Vagina (tissue), 2 donors: ENCODE measurements at regions of chr5 and their contacts with region 1.

Region 1: GRCh38 chr5:178163772-178164735 is 10.4 kb upstream of the NHP2 start:
- DNase-seq: no peak
- H3K4me3 ChIP-seq: peak overlapping the region in 1 of 2 donors; percentile 30
- H3K27ac ChIP-seq: no peak overlapping the region
- H3K4me1 ChIP-seq: peaks cover 8% of the 10 kb centered on the region
- H3K27me3 ChIP-seq: no peaks in the 10 kb centered on the region
- CTCF ChIP-seq: peak; percentile 96 to 99 (median 97)
- POLR2A ChIP-seq: no peak

Region 2: GRCh38 chr5:178075840-178076548 is 88.1 kb before region 1 on chr5:
- intact Hi-C with region 1: loop called (anchors 5 kb)
- DNase-seq: no peak
- H3K4me3 ChIP-seq: no peak overlapping the region
- H3K27ac ChIP-seq: no peak overlapping the region
- H3K4me1 ChIP-seq: no peaks in the 10 kb centered on the region
- H3K27me3 ChIP-seq: no peaks in the 10 kb centered on the region
- CTCF ChIP-seq: peak; percentile 66 to 74 (median 71)
- POLR2A ChIP-seq: no peak

Region 3: GRCh38 chr5:178131492-178131958 is 32.5 kb before region 1 on chr5:
- intact Hi-C with region 1: no loop called
- DNase-seq: no peak
- H3K4me3 ChIP-seq: peak overlapping the region; percentile 62 to 85
- H3K27ac ChIP-seq: peak overlapping the region; percentile 83
- H3K4me1 ChIP-seq: peaks cover 18% of the 10 kb centered on the region
- H3K27me3 ChIP-seq: no peaks in the 10 kb centered on the region
- CTCF ChIP-seq: no peak
- POLR2A ChIP-seq: no peak

Region 4: DNA sequence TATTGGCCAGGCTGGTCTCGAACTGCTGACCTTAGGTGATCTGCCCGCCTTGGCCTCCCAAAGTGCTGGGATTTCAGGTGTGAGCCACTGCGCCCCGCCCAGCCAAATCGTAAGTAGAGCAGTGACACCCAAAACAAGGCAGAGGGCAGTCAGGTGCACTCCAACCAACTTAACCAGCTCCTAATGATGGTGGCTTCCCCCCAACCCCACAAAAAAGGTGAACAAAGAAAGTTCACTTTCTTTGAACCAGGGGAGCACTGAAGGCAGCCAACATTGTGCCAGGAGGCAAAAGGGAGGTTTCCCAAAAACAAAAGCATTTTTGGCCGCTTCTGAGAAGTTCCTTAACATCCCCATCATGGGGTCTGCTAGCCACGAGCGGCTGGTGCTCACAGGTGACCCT is 13.5 kb after region 1 on chr5:
- intact Hi-C with region 1: no loop called
- DNase-seq: no peak
- H3K4me3 ChIP-seq: no peak overlapping the region
- H3K27ac ChIP-seq: no peak overlapping the region
- H3K4me1 ChIP-seq: no peaks in the 10 kb centered on the region
- H3K27me3 ChIP-seq: no peaks in the 10 kb centered on the region
- CTCF ChIP-seq: no peak
- POLR2A ChIP-seq: no peak

Region 5: GRCh38 chr5:178196986-178197385 is 32.9 kb after region 1 on chr5:
- intact Hi-C with region 1: no loop called
- DNase-seq: no peak
- H3K4me3 ChIP-seq: no peak overlapping the region
- H3K27ac ChIP-seq: no peak overlapping the region
- H3K4me1 ChIP-seq: peaks cover 8% of the 10 kb centered on the region
- H3K27me3 ChIP-seq: no peaks in the 10 kb centered on the region
- CTCF ChIP-seq: no peak
- POLR2A ChIP-seq: no peak